ENCODE measurements at regions of chr1 and their contacts with region 1.

Region 1: GRCh38 chr1:214102907-214103306 is 115.1 kb downstream of the PROX1 start:
- DNase-seq: no peak
- ATAC-seq: no peak
- H3K4me3 ChIP-seq: no peak overlapping the region
- H3K27ac ChIP-seq: no peak overlapping the region
- H3K4me1 ChIP-seq: peaks cover 0 to 17% (median 7%) of the 10 kb centered on the region in 9 donors
- H3K27me3 ChIP-seq: no peaks in the 10 kb centered on the region
- CTCF ChIP-seq: no peak

Region 2: DNA sequence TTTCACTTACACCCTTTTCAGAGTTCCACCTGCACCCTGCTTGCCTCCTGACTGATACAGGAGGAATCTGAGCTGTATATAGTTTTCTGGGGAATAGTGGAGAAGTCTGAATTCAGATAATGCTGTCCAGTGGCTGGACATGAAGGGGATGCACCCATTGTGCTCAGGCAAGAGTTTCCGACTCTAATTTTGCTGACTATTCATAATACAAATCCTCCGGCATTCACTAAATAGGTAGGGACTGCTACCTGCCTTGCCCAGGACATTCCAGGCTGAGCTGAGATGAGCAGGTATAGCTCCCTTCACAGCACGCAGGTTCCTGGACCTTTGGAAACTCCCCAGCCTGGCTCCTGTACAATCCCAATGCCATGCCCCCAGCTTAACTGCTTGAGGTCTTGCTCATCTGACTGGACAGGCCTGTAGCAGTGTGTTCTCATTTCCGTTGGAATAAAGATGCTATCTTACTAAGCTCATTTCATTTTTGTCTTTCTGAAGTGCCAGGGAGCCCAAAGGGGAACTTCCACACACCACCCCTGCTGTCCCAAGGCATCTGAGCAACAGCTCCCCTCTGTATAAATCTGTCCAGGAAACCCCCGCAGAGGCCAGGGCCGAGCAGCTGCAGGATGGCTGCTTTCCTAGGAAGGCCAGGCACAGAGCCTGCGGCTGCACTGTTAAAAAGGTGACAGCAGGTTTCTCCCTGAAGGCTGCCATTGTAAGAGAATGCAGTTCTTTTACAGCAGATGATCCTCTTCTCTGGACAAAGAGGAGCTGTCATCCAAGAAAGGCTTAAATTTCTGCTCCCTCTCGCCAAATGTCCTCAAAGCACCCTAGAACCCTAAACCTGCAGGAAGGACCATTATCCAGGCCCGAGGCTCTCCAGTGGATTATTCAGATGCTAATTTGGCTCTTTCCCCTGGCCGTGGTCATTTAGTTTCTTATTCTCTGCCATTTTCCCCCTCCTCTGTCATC is 1174.3 kb before region 1 on chr1:
- intact Hi-C with region 1: no loop called
- DNase-seq: no peak
- ATAC-seq: peak in 1 of 8 donors; percentile 9
- H3K4me3 ChIP-seq: no peak overlapping the region
- H3K27ac ChIP-seq: peak overlapping the region in 1 of 10 donors; percentile 16
- H3K4me1 ChIP-seq: peaks cover 0 to 8% (median 0%) of the 10 kb centered on the region in 9 donors
- H3K27me3 ChIP-seq: no peaks in the 10 kb centered on the region
- CTCF ChIP-seq: no peak

Region 3: DNA sequence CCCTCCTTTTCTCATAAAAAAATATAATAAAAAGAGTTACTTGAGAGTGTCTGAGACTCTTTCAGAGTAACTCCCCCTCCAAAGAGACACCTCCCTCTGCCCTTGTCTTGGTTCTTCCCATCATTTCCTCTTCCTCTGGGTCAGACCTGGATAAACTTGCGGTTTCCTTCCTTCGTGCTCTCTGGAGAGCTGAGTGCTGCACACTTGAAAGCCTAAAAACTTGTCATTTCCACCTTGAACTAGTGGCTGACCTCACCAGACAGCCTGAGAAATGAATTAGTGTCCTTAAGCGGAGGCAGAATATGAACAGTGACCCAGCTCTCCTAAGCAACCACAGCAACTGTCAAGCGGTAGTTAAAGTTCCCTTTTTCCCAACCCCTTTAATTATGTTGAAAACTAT is 203.5 kb before region 1 on chr1:
- intact Hi-C with region 1: no loop called
- DNase-seq: no peak
- ATAC-seq: peak in 3 of 8 donors; percentile 20 to 73 (median 40)
- H3K4me3 ChIP-seq: no peak overlapping the region
- H3K27ac ChIP-seq: no peak overlapping the region
- H3K4me1 ChIP-seq: peaks cover 0 to 11% (median 0%) of the 10 kb centered on the region in 9 donors
- H3K27me3 ChIP-seq: no peaks in the 10 kb centered on the region
- CTCF ChIP-seq: no peak

Region 4: GRCh38 chr1:213987927-213988506 is 114.9 kb before region 1 on chr1 and contains the start of gene PROX1:
- intact Hi-C with region 1: loop called in 6 of 10 experiments (anchors 5 to 10 kb)
- DNase-seq: no peak
- ATAC-seq: peak; percentile 18 to 88 (median 82)
- H3K4me3 ChIP-seq: peak within 1 kb of the TSS; percentile 49 to 70 (median 66)
- H3K27ac ChIP-seq: peak within 1 kb of the TSS; percentile 42 to 93 (median 85)
- H3K4me1 ChIP-seq: peaks cover 0 to 47% (median 19%) of the 10 kb centered on the region in 9 donors
- H3K27me3 ChIP-seq: peaks cover 5 to 94% (median 44%) of the 10 kb centered on the region in 7 donors
- CTCF ChIP-seq: no peak
- total RNA-seq, gene PROX1: 52.6 to 132 (median 116) TPM

Region 5: GRCh38 chr1:213993929-213994328 is 109.0 kb before region 1 on chr1:
- intact Hi-C with region 1: loop called in 6 of 10 experiments (anchors 5 to 10 kb)
- DNase-seq: no peak
- ATAC-seq: peak in 1 of 8 donors; percentile 23
- H3K4me3 ChIP-seq: no peak overlapping the region
- H3K27ac ChIP-seq: peak overlapping the region in 5 of 10 donors; percentile 9 to 30 (median 19)
- H3K4me1 ChIP-seq: peaks cover 0 to 31% (median 14%) of the 10 kb centered on the region in 9 donors
- H3K27me3 ChIP-seq: peaks cover 0 to 39% (median 5%) of the 10 kb centered on the region in 7 donors
- CTCF ChIP-seq: no peak

Region 6: GRCh38 chr1:214029796-214030195 is 73.1 kb before region 1 on chr1:
- intact Hi-C with region 1: loop called in 5 of 10 experiments (anchors 1 to 5 kb)
- DNase-seq: peak in 1 of 2 donors; percentile 42
- ATAC-seq: peak; percentile 74 to 90 (median 84)
- H3K4me3 ChIP-seq: no peak overlapping the region
- H3K27ac ChIP-seq: peak overlapping the region; percentile 74 to 97 (median 90)
- H3K4me1 ChIP-seq: peaks cover 0 to 48% (median 18%) of the 10 kb centered on the region in 9 donors
- H3K27me3 ChIP-seq: no peaks in the 10 kb centered on the region
- CTCF ChIP-seq: no peak

Region 7: GRCh38 chr1:214044438-214045214 is 58.3 kb before region 1 on chr1:
- intact Hi-C with region 1: loop called in 1 of 10 experiments (anchors 10 kb)
- DNase-seq: no peak
- ATAC-seq: peak in 5 of 8 donors; percentile 31 to 68 (median 49)
- H3K4me3 ChIP-seq: no peak overlapping the region
- H3K27ac ChIP-seq: peak overlapping the region in 3 of 10 donors; percentile 10 to 55 (median 34)
- H3K4me1 ChIP-seq: peaks cover 0 to 14% (median 0%) of the 10 kb centered on the region in 9 donors
- H3K27me3 ChIP-seq: no peaks in the 10 kb centered on the region
- CTCF ChIP-seq: no peak

Region 8: GRCh38 chr1:214050513-214051401 is 52.1 kb before region 1 on chr1:
- intact Hi-C with region 1: loop called in 3 of 10 experiments (anchors 10 kb)
- DNase-seq: no peak
- ATAC-seq: peak in 6 of 8 donors; percentile 28 to 83 (median 72)
- H3K4me3 ChIP-seq: no peak overlapping the region
- H3K27ac ChIP-seq: peak overlapping the region in 4 of 10 donors; percentile 7 to 27 (median 20)
- H3K4me1 ChIP-seq: peaks cover 0 to 11% (median 0%) of the 10 kb centered on the region in 9 donors
- H3K27me3 ChIP-seq: no peaks in the 10 kb centered on the region
- CTCF ChIP-seq: no peak

Region 9: DNA sequence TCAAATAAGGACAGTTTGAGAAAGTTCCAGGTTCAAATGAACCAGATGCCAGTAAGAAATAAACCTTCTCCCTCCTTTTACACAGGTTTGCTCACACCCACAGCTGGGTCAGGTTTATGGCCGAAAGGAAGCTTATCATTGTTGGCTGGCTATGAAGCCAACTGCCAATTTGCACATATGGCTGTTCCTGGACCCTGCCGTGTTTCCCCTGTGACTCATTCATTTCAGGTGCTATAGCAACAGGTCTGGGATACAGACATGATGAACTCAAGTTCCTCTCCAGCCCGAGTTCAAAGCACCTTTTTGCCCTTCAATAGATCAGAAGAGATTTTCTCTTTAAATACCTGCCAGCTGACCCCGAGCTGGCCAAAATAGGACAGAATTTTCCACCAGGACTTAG is 43.6 kb after region 1 on chr1:
- intact Hi-C with region 1: no loop called
- DNase-seq: no peak
- ATAC-seq: peak in 1 of 8 donors; percentile 31
- H3K4me3 ChIP-seq: no peak overlapping the region
- H3K27ac ChIP-seq: no peak overlapping the region
- H3K4me1 ChIP-seq: no peaks in the 10 kb centered on the region
- H3K27me3 ChIP-seq: peaks cover 0 to 12% (median 3%) of the 10 kb centered on the region in 7 donors
- CTCF ChIP-seq: no peak

Region 10: GRCh38 chr1:214303141-214303930 is 200.4 kb after region 1 on chr1:
- intact Hi-C with region 1: no loop called
- DNase-seq: no peak
- ATAC-seq: peak in 3 of 8 donors; percentile 34 to 44 (median 35)
- H3K4me3 ChIP-seq: peak overlapping the region in 3 of 10 donors; percentile 5 to 18 (median 12)
- H3K27ac ChIP-seq: peak overlapping the region in 1 of 10 donors; percentile 4
- H3K4me1 ChIP-seq: peaks cover 0 to 68% (median 17%) of the 10 kb centered on the region in 9 donors
- H3K27me3 ChIP-seq: no peaks in the 10 kb centered on the region
- CTCF ChIP-seq: no peak

Measured in heart right ventricle (tissue), 16 donors.